ENCODE measurements at regions of chr15 and their contacts with region 1.

Region 1: DNA sequence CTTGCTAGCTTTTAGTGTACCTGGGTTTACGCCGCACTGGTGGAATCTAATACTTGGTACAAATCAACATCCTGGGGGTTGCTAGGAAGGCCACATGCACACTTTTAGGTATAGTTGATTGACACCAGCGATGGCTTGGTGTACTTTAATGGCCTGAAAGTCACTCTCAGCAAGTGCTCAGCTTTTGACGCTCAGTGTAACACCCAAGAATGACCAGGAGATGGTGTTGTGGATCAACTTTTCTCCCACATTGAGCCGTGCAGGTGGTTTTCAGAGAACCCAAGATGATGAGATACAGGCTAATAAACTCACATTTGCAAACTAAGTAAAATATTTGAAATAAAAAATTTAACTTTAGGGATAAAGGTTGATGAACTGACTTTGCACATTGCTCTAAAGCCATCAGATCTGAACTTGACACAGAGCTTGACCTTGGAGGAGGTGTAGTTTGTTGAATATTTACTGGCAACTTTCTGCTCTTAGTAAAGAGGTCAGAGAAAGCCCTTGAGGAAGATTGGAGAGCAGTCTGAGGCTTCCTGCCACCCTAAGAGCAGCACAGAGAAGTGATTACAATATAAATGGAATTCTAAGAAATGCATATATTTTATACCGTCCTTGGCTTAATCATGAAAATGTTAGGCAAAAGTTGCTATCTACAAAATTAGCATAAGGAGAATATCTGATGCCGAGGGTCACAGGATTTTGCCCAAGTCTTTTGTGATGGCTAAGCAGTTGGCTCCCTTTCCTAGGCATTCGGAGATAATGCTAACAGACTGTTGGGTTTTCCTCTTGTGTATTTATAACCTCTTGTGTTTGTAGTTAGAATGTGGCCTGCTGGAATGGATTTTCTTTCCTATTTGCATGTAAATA is 143.4 kb upstream of the RASGRP1 start:
- DNase-seq: no peak
- H3K4me3 ChIP-seq: no peak overlapping the region
- H3K27ac ChIP-seq: peak overlapping the region in 2 of 4 donors; percentile 35 to 48
- H3K4me1 ChIP-seq: peaks cover 0 to 9% (median 4%) of the 10 kb centered on the region in 4 donors
- H3K27me3 ChIP-seq: no peaks in the 10 kb centered on the region
- CTCF ChIP-seq: peak; percentile 34 to 74 (median 71)
- EP300 ChIP-seq: no peak
- POLR2A ChIP-seq: no peak

Region 2: GRCh38 chr15:39756806-39757522 is 1048.9 kb after region 1 on chr15:
- intact Hi-C with region 1: loop called (anchors 2 kb)
- DNase-seq: no peak
- H3K4me3 ChIP-seq: no peak overlapping the region
- H3K27ac ChIP-seq: no peak overlapping the region
- H3K4me1 ChIP-seq: no peaks in the 10 kb centered on the region
- H3K27me3 ChIP-seq: no peaks in the 10 kb centered on the region
- CTCF ChIP-seq: peak; percentile 27 to 88 (median 66)
- EP300 ChIP-seq: no peak
- POLR2A ChIP-seq: no peak

Measured in sigmoid colon (tissue), 7 donors.